Activated CD4-positive, alpha-beta T cell treated with anti-CD3 and anti-CD28 coated beads, Interleukin-2, amount 10 ng/mL, durations not matched to agents 7 days and 5 days (primary cell): ENCODE measurements at regions of chr11 and their contacts with region 1.

Region 1: GRCh38 chr11:110445437-110445836 is 15.7 kb downstream of the FDX1 start:
- DNase-seq: no peak
- H3K4me3 Mint-ChIP-seq: no peak overlapping the region
- H3K27ac Mint-ChIP-seq: no peak overlapping the region
- H3K4me1 Mint-ChIP-seq: peaks cover 17% of the 10 kb centered on the region
- H3K27me3 Mint-ChIP-seq: no peaks in the 10 kb centered on the region

Region 2: DNA sequence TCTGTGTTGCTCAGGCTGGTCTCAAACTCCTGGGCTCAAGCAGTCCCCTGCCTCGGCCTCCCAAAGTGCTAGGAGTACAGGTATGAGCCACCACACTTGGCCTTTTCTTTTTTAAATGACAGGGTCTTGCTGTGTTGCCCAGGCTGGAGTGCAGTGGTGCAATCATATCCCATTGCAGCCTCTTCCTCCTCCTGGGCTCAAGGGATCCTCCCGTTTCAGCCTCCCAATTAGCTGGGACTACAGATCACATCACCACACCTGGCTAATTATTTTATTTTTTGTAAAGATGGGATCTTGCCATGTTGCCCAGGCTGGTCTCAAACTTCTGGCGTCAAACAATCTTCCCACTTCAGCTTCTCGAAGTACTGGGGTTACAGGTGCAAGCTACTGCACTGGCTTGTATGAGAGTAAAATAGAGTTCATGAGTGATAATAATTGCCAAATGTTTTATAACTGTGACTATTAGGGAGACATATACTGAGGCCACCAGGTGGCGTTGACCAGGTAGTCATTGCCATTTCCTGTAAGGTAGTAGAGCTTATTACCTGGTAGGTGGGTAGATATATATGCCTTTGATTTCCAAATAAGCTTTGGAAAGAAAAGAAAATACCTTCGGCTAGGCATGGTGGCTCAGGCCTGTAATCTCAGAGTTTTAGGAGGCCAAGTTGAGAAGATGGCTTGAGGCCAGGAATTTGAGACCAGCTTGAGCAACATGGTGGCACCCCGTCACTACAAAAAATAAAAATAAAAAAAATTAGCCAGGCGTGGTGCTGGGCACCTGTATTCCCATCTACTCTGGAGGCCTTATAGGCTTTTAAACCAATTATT is 10.3 kb before region 1 on chr11:
- CTCF ChIA-PET with region 1: interaction called, 18 read pairs
- POLR2A ChIA-PET with region 1: no interaction called
- DNase-seq: no peak
- H3K4me3 Mint-ChIP-seq: no peak overlapping the region
- H3K27ac Mint-ChIP-seq: no peak overlapping the region
- H3K4me1 Mint-ChIP-seq: peaks cover 48% of the 10 kb centered on the region
- H3K27me3 Mint-ChIP-seq: no peaks in the 10 kb centered on the region